Calu3 (cell line): ENCODE measurements at regions of chr9 and their contacts with region 1.

Region 1: DNA sequence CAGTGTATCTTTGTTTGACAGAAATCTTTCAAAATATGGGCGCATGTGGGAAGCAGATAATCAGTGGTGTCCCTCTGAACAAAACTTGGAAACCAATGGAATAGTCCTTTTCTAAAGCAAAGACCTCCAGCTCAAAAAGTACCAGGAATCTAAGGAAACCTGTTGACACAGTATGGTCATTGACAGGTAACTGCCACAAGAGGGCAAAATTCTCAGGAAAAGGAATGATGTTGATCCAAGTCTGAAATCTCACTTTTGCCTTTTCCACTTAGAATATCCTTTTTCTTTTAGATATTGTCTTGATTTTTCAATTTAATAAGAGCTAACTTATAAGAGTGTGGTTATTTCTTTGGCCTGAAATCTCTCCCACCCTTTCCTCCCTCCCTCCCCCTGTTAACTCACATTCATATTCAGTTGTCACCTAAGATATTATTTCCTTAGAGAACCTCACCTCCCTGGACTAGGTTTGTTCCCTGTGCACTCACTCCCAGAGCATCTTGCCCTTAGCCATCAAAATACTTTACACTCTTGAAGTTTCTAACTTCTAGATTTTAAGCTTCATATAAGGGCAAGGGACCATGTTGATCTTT is 59.0 kb upstream of the BARX1 start:
- DNase-seq: no peak
- H3K4me3 Mint-ChIP-seq: no peak overlapping the region
- H3K27ac Mint-ChIP-seq: no peak overlapping the region
- H3K4me1 Mint-ChIP-seq: no peaks in the 10 kb centered on the region
- H3K27me3 Mint-ChIP-seq: peaks cover 18% of the 10 kb centered on the region
- CTCF ChIP-seq: peak; percentile 29

Region 2: GRCh38 chr9:94213511-94214124 is 199.5 kb after region 1 on chr9:
- CTCF ChIA-PET with region 1: interaction called, 20 read pairs
- intact Hi-C with region 1: loop called (anchors 1 kb)
- DNase-seq: peak; percentile 60
- H3K4me3 Mint-ChIP-seq: no peak overlapping the region
- H3K27ac Mint-ChIP-seq: no peak overlapping the region
- H3K4me1 Mint-ChIP-seq: peaks cover 8% of the 10 kb centered on the region
- H3K27me3 Mint-ChIP-seq: peaks cover 5% of the 10 kb centered on the region
- CTCF ChIP-seq: peak; percentile 24